Cardiac septum (tissue), 1 donor: ENCODE measurements at regions of chr16 and their contacts with region 1.

Region 1: GRCh38 chr16:23595951-23596720 is at the start of gene NDUFAB1:
- DNase-seq: peak; percentile 96
- total RNA-seq, gene NDUFAB1: 277 TPM

Region 2: GRCh38 chr16:23510164-23510914 is 85.8 kb before region 1 on chr16 and contains the start of gene GGA2:
- intact Hi-C with region 1: loop called (anchors 10 kb)
- DNase-seq: peak; percentile 92
- total RNA-seq, gene GGA2: 38.1 TPM

Region 3: DNA sequence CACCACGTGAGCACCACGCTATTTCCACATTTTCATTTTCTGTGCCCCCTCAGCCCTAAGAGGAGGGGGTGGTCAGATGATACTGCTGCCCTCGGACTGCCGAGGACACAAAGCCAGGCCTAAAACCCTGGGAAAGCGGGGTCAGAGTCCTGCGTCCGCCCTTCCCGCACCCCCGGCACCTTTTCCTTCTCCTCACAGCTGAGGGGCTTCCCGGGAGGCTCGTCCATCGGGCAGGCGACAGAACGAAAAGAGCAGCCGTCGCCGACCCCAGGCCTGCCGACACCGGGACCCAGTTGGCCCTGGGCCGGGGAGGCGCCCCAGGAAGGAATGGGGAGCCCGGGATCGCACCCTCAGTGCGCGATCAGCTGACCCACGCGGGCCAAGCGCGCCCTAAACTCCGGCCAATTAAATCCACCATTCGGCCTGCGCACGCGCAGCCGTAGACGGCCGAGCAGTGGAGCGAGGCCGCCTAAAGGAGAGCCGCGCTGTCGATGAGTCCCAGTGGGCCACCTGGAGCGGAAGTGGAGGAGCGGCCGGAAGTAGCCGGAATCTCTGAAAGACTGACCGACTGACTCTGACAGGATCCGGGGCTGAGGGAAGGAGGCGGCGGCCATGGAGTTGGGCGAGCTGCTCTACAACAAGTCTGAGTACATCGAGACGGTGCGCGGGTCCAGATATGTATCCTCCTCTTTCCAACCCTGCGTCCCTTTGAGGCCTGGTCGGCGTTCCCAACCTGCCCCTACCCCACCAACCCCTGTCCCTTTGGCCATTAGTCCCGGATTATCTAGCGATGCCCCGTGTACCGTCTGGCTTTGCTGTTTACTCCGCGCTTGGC is 45.0 kb after region 1 on chr16 and contains the starts of genes DCTN5 and PALB2:
- intact Hi-C with region 1: loop called (anchors 2 kb)
- DNase-seq: peak; percentile 97
- total RNA-seq, gene DCTN5: 38.4 TPM
- total RNA-seq, gene PALB2: 4.6 TPM

Region 4: DNA sequence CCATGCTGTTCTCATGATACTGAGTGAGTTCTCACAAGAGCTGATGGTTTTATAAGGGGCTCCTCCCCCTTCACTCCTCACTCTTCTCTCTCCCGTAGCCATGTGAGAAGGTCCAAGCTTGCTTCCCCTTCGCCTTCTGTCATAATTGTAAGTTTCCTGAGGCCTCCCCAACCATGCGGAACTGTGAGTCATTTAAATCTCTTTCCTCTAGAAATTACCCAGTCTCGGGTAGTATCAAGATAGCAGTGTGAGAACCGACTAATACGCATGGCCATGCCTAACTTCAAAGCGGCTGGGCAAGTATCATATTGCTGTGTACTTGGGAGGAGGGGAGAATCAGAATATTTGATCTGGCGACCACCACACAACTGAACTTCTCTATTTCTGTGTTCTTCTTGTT is 328.0 kb after region 1 on chr16:
- intact Hi-C with region 1: no loop called
- DNase-seq: no peak